ENCODE measurements at regions of chr11 and their contacts with region 1.

Region 1: DNA sequence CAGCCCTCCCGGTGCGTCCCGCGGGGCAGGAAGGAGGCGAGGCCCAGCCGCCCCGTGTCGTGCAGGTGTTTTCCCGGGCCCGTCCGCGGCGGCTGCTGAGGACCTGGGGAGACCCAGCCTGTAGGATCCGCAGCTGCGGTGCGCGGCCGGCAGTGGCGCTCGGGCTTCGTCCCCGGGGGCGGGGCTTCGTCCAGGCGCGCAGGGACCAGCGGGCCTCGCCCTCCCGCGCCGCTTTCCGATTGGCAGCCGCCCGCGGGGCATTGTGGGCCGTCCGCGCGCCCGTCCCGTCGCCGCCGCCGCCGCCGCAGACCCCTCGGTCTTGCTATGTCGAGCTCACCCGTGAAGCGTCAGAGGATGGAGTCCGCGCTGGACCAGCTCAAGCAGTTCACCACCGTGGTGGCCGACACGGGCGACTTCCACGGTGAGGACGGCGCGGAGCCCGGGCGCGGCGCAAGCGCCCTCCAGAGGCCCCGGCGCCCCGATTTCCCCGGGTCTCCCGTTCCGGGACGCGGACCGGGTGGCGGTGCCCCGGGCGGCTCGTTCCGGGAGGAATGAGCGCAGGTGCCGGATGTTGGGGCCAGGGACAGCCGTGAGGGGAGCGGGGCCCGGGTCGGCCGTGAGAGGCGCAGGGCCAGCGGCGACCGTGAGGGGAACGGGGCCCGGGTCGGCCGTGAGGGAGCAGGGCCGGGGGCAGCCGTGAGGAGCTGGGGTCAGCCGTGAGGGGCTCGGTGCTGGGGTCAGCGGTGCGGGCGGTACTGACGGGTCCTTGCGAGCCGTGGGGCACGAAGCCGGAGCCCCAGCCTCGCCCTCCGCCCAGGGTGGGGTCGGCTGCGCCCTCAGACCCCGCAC is at the start of gene TALDO1:
- DNase-seq: peak; percentile 71 to 96
- H3K4me3 ChIP-seq: peak within 1 kb of the TSS; percentile 72 to 91 (median 81)
- H3K27ac ChIP-seq: peak within 1 kb of the TSS; percentile 85
- H3K4me1 ChIP-seq: peaks cover 0 to 15% (median 4%) of the 10 kb centered on the region in 4 experiments; a peak in 5 of 7 replicates
- H3K27me3 ChIP-seq: no peaks in the 10 kb centered on the region
- CTCF ChIP-seq: peak in 1 of 3 experiments; percentile 19; a peak in 1 of 4 replicates
- EP300 ChIP-seq: 0 out of 3 replicates have a peak, but pooled peaks of 1 of the 2 experiments have one; percentile 45
- POLR2A ChIP-seq: peak; percentile 81 to 85
- RAD21 ChIP-seq: no peak
- total RNA-seq, gene TALDO1: 302 and 308 TPM in 2 replicates

Region 2: DNA sequence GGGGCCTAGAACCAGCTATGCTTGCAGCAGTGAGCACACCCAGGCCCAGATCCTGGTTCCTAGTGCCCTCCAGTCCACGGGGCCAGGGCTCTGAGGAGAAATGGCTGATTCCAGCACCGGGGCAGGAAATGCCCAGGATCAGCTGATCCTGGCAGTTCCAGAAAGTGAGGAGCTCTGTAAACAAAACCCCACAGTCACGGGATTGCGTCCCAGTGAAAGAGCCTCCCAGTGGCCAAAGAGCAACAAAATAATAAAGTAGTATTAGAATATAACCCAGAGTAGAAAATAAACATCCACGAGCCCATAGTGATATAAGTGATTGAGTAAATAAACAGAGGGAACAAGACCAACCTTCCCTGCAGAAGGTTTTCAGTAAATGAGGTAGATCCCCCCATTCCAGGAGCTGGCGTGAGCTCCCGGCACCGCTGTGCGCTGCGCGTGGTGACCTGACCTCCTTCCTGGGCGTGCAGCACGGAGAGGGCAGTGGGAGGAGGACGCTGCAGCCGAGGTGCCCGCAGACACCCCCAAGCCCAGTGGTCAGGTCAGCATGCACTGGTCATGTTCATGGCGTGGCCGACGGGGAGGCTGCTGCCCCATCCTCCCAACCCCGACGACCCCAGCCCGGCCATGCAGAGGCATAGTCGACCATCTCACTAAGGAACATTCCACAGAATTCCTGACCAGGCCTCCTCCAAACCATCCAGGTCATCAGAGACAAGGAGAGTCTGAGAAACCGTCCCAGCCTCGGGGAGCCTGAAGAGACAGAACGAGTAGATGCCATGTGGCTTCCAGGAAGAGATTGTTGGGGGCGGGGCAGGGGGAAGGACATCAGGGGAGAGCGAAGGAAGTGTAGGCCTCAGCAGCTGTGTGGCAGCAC is 277.5 kb before region 1 on chr11:
- CTCF ChIA-PET with region 1: no interaction called
- POLR2A ChIA-PET with region 1: no interaction called
- DNase-seq: no peak
- H3K4me3 ChIP-seq: no peak overlapping the region
- H3K27ac ChIP-seq: peak overlapping the region; percentile 77
- H3K4me1 ChIP-seq: peaks cover 0 to 12% (median 5%) of the 10 kb centered on the region in 4 experiments; a peak in 6 of 7 replicates
- H3K27me3 ChIP-seq: no peaks in the 10 kb centered on the region
- CTCF ChIP-seq: no peak
- EP300 ChIP-seq: no peak
- POLR2A ChIP-seq: no peak
- RAD21 ChIP-seq: no peak

Region 3: GRCh38 chr11:695538-696248 is 51.7 kb before region 1 on chr11 and contains the start of gene TMEM80:
- CTCF ChIA-PET with region 1: interaction called, 3 read pairs
- POLR2A ChIA-PET with region 1: interaction called, 11 read pairs
- DNase-seq: peak; percentile 91 to 99
- H3K4me3 ChIP-seq: peak within 1 kb of the TSS; percentile 62 to 92 (median 77)
- H3K27ac ChIP-seq: peak within 1 kb of the TSS; percentile 97
- H3K4me1 ChIP-seq: peaks cover 0 to 28% (median 11%) of the 10 kb centered on the region in 4 experiments; a peak in 6 of 7 replicates
- H3K27me3 ChIP-seq: no peaks in the 10 kb centered on the region
- CTCF ChIP-seq: 0 out of 4 replicates have a peak, but pooled peaks of 1 of the 3 experiments have one; percentile 0
- EP300 ChIP-seq: no peak
- POLR2A ChIP-seq: peak in 1 of 2 experiments; percentile 59; a peak in 1 of 3 replicates
- RAD21 ChIP-seq: no peak
- total RNA-seq, gene TMEM80: 7.3 and 8.0 TPM in 2 replicates

Region 4: DNA sequence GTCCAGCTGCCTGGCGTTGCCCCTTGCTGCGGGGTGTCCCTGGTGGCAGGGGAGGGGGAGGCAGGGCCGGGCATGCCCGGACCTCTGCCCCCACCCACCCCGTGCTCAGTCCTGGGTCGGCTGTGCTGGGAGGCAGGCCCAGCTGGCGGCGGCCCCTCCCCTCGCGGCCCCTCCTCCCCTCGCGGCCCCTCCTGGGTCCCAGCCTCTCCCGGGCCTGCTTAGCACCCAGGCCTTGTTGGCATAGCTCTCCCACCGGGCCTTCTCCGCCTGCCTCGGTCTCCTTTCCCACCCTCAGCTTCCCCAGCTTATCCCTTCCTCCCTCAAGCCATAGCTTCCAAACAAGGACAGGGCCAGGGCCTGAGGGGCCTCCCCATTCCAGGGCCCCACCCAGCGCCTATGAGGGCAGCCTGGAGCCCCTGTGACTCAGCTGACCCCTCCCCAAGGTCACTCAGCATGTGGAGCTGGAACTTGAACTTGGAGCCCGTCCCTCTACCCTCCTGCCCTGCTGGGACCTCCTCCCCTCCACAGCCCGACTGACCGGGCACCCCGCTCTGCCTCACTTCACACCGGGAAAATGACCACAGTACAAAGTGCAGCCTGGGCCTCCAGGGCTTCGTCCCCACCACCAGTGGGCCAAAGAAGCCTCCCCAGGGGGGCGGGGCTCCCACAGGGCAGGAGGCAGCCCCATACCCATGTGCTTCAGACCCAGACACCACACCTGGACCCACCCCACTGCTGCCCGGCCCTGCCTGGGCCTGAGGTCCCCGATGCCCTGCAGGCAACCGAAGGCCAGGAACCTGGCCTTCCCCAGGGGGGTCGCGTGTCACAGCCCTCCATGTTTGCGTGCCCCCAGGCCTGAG is 40.2 kb before region 1 on chr11:
- CTCF ChIA-PET with region 1: interaction called, 3 read pairs
- POLR2A ChIA-PET with region 1: interaction called, 11 read pairs
- DNase-seq: no peak
- H3K4me3 ChIP-seq: peak overlapping the region; percentile 38 to 64 (median 49)
- H3K27ac ChIP-seq: no peak overlapping the region
- H3K4me1 ChIP-seq: peaks cover 0 to 48% (median 33%) of the 10 kb centered on the region in 4 experiments; a peak in 6 of 7 replicates
- H3K27me3 ChIP-seq: no peaks in the 10 kb centered on the region
- CTCF ChIP-seq: no peak; a peak in 1 of 4 replicates
- EP300 ChIP-seq: no peak
- POLR2A ChIP-seq: no peak
- RAD21 ChIP-seq: no peak

Region 5: GRCh38 chr11:720642-721246 is 26.6 kb before region 1 on chr11:
- CTCF ChIA-PET with region 1: interaction called, 395 read pairs
- POLR2A ChIA-PET with region 1: interaction called, 216 read pairs
- DNase-seq: peak in 1 of 2 experiments; percentile 86
- H3K4me3 ChIP-seq: peak overlapping the region in 3 of 4 experiments; percentile 19 to 49 (median 36); a peak in 5 of 8 replicates
- H3K27ac ChIP-seq: no peak overlapping the region
- H3K4me1 ChIP-seq: peaks cover 0 to 12% (median 7%) of the 10 kb centered on the region in 4 experiments; a peak in 5 of 7 replicates
- H3K27me3 ChIP-seq: peaks cover 0 to 8% (median 8%) of the 10 kb centered on the region in 4 experiments; a peak in 4 of 7 replicates
- CTCF ChIP-seq: peak in 1 of 3 experiments; percentile 30; a peak in 2 of 4 replicates
- EP300 ChIP-seq: 0 out of 3 replicates have a peak, but pooled peaks of 1 of the 2 experiments have one; percentile 18
- POLR2A ChIP-seq: peak in 1 of 2 experiments; percentile 55; a peak in 2 of 3 replicates
- RAD21 ChIP-seq: peak in 1 of 2 experiments; percentile 40; a peak in 1 of 4 replicates

Region 6: GRCh38 chr11:765025-765801 is 17.8 kb after region 1 on chr11:
- CTCF ChIA-PET with region 1: interaction called, 105 read pairs
- POLR2A ChIA-PET with region 1: interaction called, 636 read pairs
- DNase-seq: peak in 1 of 2 experiments; percentile 87
- H3K4me3 ChIP-seq: no peak overlapping the region
- H3K27ac ChIP-seq: no peak overlapping the region
- H3K4me1 ChIP-seq: peaks cover 0 to 12% (median 7%) of the 10 kb centered on the region in 4 experiments; a peak in 6 of 7 replicates
- H3K27me3 ChIP-seq: no peaks in the 10 kb centered on the region
- CTCF ChIP-seq: peak; percentile 66 to 94 (median 82)
- EP300 ChIP-seq: no peak
- POLR2A ChIP-seq: peak in 1 of 2 experiments; percentile 60; a peak in 1 of 3 replicates
- RAD21 ChIP-seq: peak; percentile 86 to 87

Region 7: GRCh38 chr11:777288-778255 is 30.2 kb after region 1 on chr11 and contains the start of gene GATD1:
- CTCF ChIA-PET with region 1: interaction called, 3 read pairs
- POLR2A ChIA-PET with region 1: interaction called, 636 read pairs
- DNase-seq: peak in 1 of 2 experiments; percentile 98
- H3K4me3 ChIP-seq: peak within 1 kb of the TSS; percentile 77 to 91 (median 85)
- H3K27ac ChIP-seq: peak within 1 kb of the TSS; percentile 91; the same call in 1 of the 2 replicates
- H3K4me1 ChIP-seq: peaks cover 3 to 25% (median 12%) of the 10 kb centered on the region in 4 experiments
- H3K27me3 ChIP-seq: no peaks in the 10 kb centered on the region; a peak in 1 of 7 replicates
- CTCF ChIP-seq: 0 out of 4 replicates have a peak, but pooled peaks of 1 of the 3 experiments have one; percentile 7
- EP300 ChIP-seq: no peak
- POLR2A ChIP-seq: peak in 1 of 2 experiments; percentile 80; a peak in 2 of 3 replicates
- RAD21 ChIP-seq: no peak
- total RNA-seq, gene GATD1: 47.5 and 54.9 TPM in 2 replicates